Esophagus squamous epithelium (tissue), 5 donors: ENCODE measurements at regions of chr19 and their contacts with region 1.

Region 1: GRCh38 chr19:48102870-48103751 is 7.5 kb downstream of the PLA2G4C start:
- DNase-seq: no peak
- H3K4me3 ChIP-seq: no peak overlapping the region
- H3K27ac ChIP-seq: no peak overlapping the region
- H3K4me1 ChIP-seq: peaks cover 0 to 12% (median 9%) of the 10 kb centered on the region in 3 donors
- H3K27me3 ChIP-seq: no peaks in the 10 kb centered on the region
- CTCF ChIP-seq: peak; percentile 25 to 68 (median 54)
- POLR2A ChIP-seq: no peak

Region 2: GRCh38 chr19:48255376-48256303 is 152.5 kb after region 1 on chr19 and contains the start of gene CARD8:
- intact Hi-C with region 1: loop called (anchors 10 kb)
- DNase-seq: peak; percentile 27
- H3K4me3 ChIP-seq: peak within 1 kb of the TSS; percentile 46 to 76 (median 64)
- H3K27ac ChIP-seq: peak within 1 kb of the TSS; percentile 89 to 95 (median 92)
- H3K4me1 ChIP-seq: peaks cover 6 to 49% (median 19%) of the 10 kb centered on the region in 3 donors
- H3K27me3 ChIP-seq: no peaks in the 10 kb centered on the region
- CTCF ChIP-seq: peak in 4 of 6 experiments; percentile 17 to 36 (median 30)
- POLR2A ChIP-seq: peak in 3 of 4 donors; percentile 8 to 63 (median 55)
- total RNA-seq, gene CARD8: 9.7 to 21.9 (median 11.3) TPM